Activated T-helper 1 cell treated with anti-CD3 and anti-CD28 coated beads, Interleukin-12 subunit alpha, Interleukin-12 subunit beta, Interleukin-2, Interleukin-4 antibody, amounts not matched to agents 30 ng/mL and 10 ng/mL and 1 ng/mL, durations not matched to agents 14 hours and 24 hours and 36 hours (primary cell): ENCODE measurements at regions of chr5 and their contacts with region 1.

Region 1: GRCh38 chr5:171316258-171317121 is 7.4 kb downstream of the TLX3 start:
- DNase-seq: no peak
- H3K4me3 Mint-ChIP-seq: no peak overlapping the region
- H3K27ac Mint-ChIP-seq: no peak overlapping the region
- H3K4me1 Mint-ChIP-seq: peaks cover 6% of the 10 kb centered on the region
- H3K27me3 Mint-ChIP-seq: peaks cover 63% of the 10 kb centered on the region

Region 2: GRCh38 chr5:171149333-171149732 is 167.2 kb before region 1 on chr5:
- intact Hi-C with region 1: no loop called
- DNase-seq: no peak
- H3K4me3 Mint-ChIP-seq: no peak overlapping the region
- H3K27ac Mint-ChIP-seq: no peak overlapping the region
- H3K4me1 Mint-ChIP-seq: no peaks in the 10 kb centered on the region
- H3K27me3 Mint-ChIP-seq: no peaks in the 10 kb centered on the region

Region 3: GRCh38 chr5:171306166-171306565 is 10.3 kb before region 1 on chr5:
- intact Hi-C with region 1: no loop called
- DNase-seq: no peak
- H3K4me3 Mint-ChIP-seq: no peak overlapping the region
- H3K27ac Mint-ChIP-seq: no peak overlapping the region
- H3K4me1 Mint-ChIP-seq: peaks cover 6% of the 10 kb centered on the region
- H3K27me3 Mint-ChIP-seq: peaks cover 46% of the 10 kb centered on the region

Region 4: GRCh38 chr5:172733131-172733973 is 1416.9 kb after region 1 on chr5:
- intact Hi-C with region 1: no loop called
- DNase-seq: no peak
- H3K4me3 Mint-ChIP-seq: no peak overlapping the region
- H3K27ac Mint-ChIP-seq: no peak overlapping the region
- H3K4me1 Mint-ChIP-seq: no peaks in the 10 kb centered on the region
- H3K27me3 Mint-ChIP-seq: peaks cover 3% of the 10 kb centered on the region

Region 5: GRCh38 chr5:173238312-173239232 is 1922.1 kb after region 1 on chr5:
- intact Hi-C with region 1: loop called (anchors 2 kb)
- DNase-seq: no peak
- H3K4me3 Mint-ChIP-seq: peak overlapping the region; percentile 10
- H3K27ac Mint-ChIP-seq: peak overlapping the region; percentile 76
- H3K4me1 Mint-ChIP-seq: peaks cover 20% of the 10 kb centered on the region
- H3K27me3 Mint-ChIP-seq: peaks cover 94% of the 10 kb centered on the region